Activated CD4-positive, alpha-beta T cell treated with anti-CD3 and anti-CD28 coated beads, Interleukin-2, amount 10 ng/mL, durations not matched to agents 7 days and 5 days (primary cell): ENCODE measurements at regions of chr22 and their contacts with region 1.

Region 1: DNA sequence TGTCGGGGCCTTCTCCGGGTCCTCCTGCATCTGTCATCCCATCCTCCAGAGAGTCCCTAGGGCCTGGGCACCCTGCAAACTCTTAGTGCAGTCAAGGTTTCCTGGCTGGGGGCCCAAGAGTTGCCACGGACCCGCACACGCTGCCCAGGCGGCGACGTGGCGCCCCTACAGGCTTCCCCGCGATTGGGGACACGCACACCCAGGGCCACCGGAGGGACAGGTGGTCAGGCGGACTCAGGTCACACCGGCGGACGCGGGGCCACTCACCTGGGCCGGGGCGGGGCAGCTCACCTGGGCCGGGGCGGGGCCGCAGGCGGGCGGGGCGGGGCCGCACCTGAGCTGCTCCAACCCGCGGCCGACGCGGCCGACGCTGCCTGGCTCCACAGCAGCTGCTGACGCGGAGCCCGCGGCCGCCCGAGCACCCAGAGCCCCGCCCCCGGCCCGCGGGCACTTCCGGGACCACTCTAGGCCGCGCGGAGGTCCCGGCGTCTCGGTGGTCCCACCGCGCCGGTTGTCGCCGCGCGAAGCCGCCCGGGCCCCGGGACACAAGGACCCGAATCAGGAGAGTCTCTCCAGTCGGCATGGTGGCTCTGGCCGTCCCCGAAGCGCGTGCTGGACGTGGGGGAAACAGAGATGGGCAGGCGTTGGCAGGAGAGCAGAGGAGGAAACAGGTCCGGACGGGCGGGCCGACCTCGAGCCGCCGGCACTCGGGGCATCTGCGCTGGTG is at the start of gene ZNF70:
- DNase-seq: peak; percentile 80
- H3K4me3 Mint-ChIP-seq: peak within 1 kb of the TSS; percentile 79
- H3K27ac Mint-ChIP-seq: peak within 1 kb of the TSS; percentile 73
- H3K4me1 Mint-ChIP-seq: peaks cover 17% of the 10 kb centered on the region
- H3K27me3 Mint-ChIP-seq: no peaks in the 10 kb centered on the region
- total RNA-seq, gene ZNF70: 1.9 to 2.0 TPM

Region 2: GRCh38 chr22:23613193-23613972 is 137.5 kb before region 1 on chr22:
- CTCF ChIA-PET with region 1: no interaction called
- POLR2A ChIA-PET with region 1: no interaction called
- DNase-seq: no peak
- H3K4me3 Mint-ChIP-seq: no peak overlapping the region
- H3K27ac Mint-ChIP-seq: no peak overlapping the region
- H3K4me1 Mint-ChIP-seq: peaks cover 16% of the 10 kb centered on the region
- H3K27me3 Mint-ChIP-seq: no peaks in the 10 kb centered on the region

Region 3: GRCh38 chr22:23767673-23768548 is 17.0 kb after region 1 on chr22 and contains the start of gene CHCHD10:
- CTCF ChIA-PET with region 1: interaction called, 20 read pairs
- POLR2A ChIA-PET with region 1: no interaction called
- DNase-seq: peak; percentile 78
- H3K4me3 Mint-ChIP-seq: peak within 1 kb of the TSS; percentile 76
- H3K27ac Mint-ChIP-seq: peak within 1 kb of the TSS; percentile 84
- H3K4me1 Mint-ChIP-seq: peaks cover 49% of the 10 kb centered on the region
- H3K27me3 Mint-ChIP-seq: peaks cover 2% of the 10 kb centered on the region
- total RNA-seq, gene CHCHD10: 44.6 to 55.4 TPM